ENCODE measurements at regions of chr9 and their contacts with region 1.

Region 1: DNA sequence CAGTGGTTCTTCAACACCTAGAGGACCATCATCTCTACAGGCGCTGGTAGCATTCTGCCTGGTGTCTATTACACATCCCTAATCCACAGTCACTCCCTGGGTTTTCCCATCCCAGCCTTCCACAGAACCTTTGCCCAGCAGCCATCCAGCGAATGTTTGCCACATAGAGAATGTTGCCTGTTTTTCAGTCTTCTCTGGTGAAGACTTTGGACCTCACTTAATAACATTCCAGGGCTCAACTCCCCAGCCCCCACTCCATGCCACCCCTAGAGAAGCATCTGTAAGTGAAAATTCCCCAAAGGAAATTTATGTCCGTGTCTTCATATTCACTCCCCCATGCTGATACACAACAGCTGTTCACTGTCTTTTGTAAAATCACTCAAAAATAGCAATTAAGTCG is 249.6 kb downstream of the AOPEP start:
- DNase-seq: no peak
- H3K4me3 ChIP-seq: no peak overlapping the region
- H3K4me3 Mint-ChIP-seq: no peak overlapping the region
- H3K27ac Mint-ChIP-seq: peak overlapping the region; percentile 2
- H3K4me1 ChIP-seq: peaks cover 10% of the 10 kb centered on the region
- H3K4me1 Mint-ChIP-seq: peaks cover 14% of the 10 kb centered on the region
- H3K27me3 ChIP-seq: no peaks in the 10 kb centered on the region
- H3K27me3 Mint-ChIP-seq: no peaks in the 10 kb centered on the region
- CTCF ChIP-seq: no peak

Region 2: GRCh38 chr9:94882966-94883641 is 93.0 kb before region 1 on chr9:
- CTCF ChIA-PET with region 1: no interaction called
- POLR2A ChIA-PET with region 1: no interaction called
- intact Hi-C with region 1: no loop called
- DNase-seq: no peak
- H3K4me3 ChIP-seq: no peak overlapping the region
- H3K4me3 Mint-ChIP-seq: no peak overlapping the region
- H3K27ac Mint-ChIP-seq: no peak overlapping the region
- H3K4me1 ChIP-seq: peaks cover 14% of the 10 kb centered on the region
- H3K4me1 Mint-ChIP-seq: peaks cover 8% of the 10 kb centered on the region
- H3K27me3 ChIP-seq: no peaks in the 10 kb centered on the region
- H3K27me3 Mint-ChIP-seq: no peaks in the 10 kb centered on the region
- CTCF ChIP-seq: no peak

Region 3: GRCh38 chr9:94952565-94953373 is 23.3 kb before region 1 on chr9:
- CTCF ChIA-PET with region 1: no interaction called
- POLR2A ChIA-PET with region 1: no interaction called
- intact Hi-C with region 1: no loop called
- DNase-seq: no peak
- H3K4me3 ChIP-seq: no peak overlapping the region
- H3K4me3 Mint-ChIP-seq: no peak overlapping the region
- H3K27ac Mint-ChIP-seq: peak overlapping the region; percentile 77
- H3K4me1 ChIP-seq: peaks cover 17% of the 10 kb centered on the region
- H3K4me1 Mint-ChIP-seq: peaks cover 23% of the 10 kb centered on the region
- H3K27me3 ChIP-seq: no peaks in the 10 kb centered on the region
- H3K27me3 Mint-ChIP-seq: no peaks in the 10 kb centered on the region
- CTCF ChIP-seq: no peak

Region 4: DNA sequence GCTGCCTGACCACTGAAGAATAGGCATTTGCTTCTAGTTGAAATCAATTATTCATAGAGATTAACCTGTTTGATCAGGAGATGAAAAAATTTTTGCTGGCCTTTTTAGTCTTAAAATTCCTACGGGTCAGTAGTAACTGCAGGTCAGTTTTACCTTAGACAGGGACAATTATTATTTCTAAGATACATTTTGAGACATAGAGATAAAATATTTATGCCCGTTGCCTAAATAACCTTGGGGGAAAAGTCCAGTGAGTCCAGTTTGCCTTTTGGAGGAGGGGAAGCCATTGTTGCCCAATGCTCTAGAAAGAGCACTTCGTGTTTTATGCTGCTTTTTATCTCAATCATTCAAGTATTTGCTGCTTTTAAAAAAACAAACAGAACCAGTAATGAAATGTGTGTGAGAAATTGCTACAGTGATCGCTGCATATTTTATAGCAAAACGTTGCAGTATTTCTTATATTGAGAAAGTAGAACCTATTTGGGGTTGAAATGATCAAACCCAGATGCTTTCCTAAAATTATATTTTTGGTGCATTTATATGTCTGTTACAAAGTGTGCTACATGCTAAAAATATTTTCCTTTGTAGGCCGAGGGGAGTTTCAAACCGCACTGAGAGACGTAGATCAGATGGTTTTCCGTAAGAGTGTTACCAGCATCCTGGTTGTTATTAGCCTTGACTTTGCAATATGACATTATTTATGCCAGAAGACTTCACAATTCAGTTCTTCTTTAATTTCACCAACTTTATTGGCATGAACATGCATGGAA is 17.2 kb after region 1 on chr9:
- CTCF ChIA-PET with region 1: no interaction called
- POLR2A ChIA-PET with region 1: no interaction called
- intact Hi-C with region 1: loop called (anchors 1 kb)
- DNase-seq: no peak
- H3K4me3 ChIP-seq: no peak overlapping the region
- H3K4me3 Mint-ChIP-seq: peak overlapping the region; percentile 8
- H3K27ac Mint-ChIP-seq: peak overlapping the region; percentile 17
- H3K4me1 ChIP-seq: peaks cover 45% of the 10 kb centered on the region
- H3K4me1 Mint-ChIP-seq: peaks cover 25% of the 10 kb centered on the region
- H3K27me3 ChIP-seq: no peaks in the 10 kb centered on the region
- H3K27me3 Mint-ChIP-seq: no peaks in the 10 kb centered on the region
- CTCF ChIP-seq: no peak

Region 5: GRCh38 chr9:95043826-95044225 is 67.7 kb after region 1 on chr9:
- CTCF ChIA-PET with region 1: no interaction called
- POLR2A ChIA-PET with region 1: no interaction called
- intact Hi-C with region 1: no loop called
- DNase-seq: no peak
- H3K4me3 ChIP-seq: no peak overlapping the region
- H3K4me3 Mint-ChIP-seq: no peak overlapping the region
- H3K27ac Mint-ChIP-seq: no peak overlapping the region
- H3K4me1 ChIP-seq: peaks cover 4% of the 10 kb centered on the region; the same call in 1 of the 2 replicates
- H3K4me1 Mint-ChIP-seq: peaks cover 15% of the 10 kb centered on the region
- H3K27me3 ChIP-seq: no peaks in the 10 kb centered on the region
- H3K27me3 Mint-ChIP-seq: no peaks in the 10 kb centered on the region
- CTCF ChIP-seq: no peak

Region 6: DNA sequence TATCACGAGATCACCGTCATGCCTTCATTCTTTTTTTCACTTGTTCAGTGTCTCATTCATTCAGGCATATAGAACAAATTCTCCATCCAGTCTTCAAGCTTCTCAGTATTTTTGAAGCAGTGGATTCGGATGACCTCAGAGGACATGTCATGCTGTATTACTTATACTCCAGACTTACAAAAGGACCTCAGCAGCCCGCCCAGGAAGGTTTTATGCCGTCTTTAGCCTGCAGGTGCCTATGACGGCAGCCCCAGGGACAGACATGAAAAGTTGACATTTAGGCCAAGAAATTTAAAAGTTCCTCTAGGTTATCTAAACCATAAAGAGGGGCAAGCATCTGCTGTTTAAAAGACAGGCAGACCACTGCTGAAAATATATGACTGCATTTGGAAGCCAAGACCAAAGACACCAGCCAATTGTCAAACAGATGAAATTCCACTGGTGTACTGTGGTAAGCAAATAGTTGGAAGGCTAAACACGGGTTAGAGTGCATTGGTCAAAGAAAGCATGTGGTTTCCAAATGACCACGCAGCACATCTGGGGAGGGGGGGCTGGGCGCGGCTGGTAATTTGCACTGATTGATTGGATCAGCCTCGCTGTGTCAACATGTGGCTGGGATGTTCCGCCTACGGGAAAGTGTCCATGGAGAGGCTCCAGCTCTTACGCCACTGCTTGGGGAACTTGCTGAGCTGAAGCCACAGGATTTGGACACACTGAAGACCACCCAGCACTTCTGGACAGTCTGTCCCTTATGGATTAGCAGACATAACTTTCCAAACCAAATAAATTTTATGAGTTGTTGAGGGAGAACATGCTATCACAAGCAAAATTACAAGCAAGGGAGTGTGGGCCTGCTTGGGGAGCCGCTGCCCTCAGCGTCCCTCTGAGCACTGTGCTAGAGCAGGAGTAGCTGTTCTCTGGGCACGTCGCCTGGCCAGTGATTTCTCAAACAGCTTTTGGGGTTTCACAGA is 167.8 kb after region 1 on chr9:
- CTCF ChIA-PET with region 1: no interaction called
- POLR2A ChIA-PET with region 1: no interaction called
- intact Hi-C with region 1: no loop called
- DNase-seq: no peak
- H3K4me3 ChIP-seq: no peak overlapping the region
- H3K4me3 Mint-ChIP-seq: no peak overlapping the region
- H3K27ac Mint-ChIP-seq: no peak overlapping the region
- H3K4me1 ChIP-seq: no peaks in the 10 kb centered on the region
- H3K4me1 Mint-ChIP-seq: no peaks in the 10 kb centered on the region
- H3K27me3 ChIP-seq: no peaks in the 10 kb centered on the region
- H3K27me3 Mint-ChIP-seq: no peaks in the 10 kb centered on the region
- CTCF ChIP-seq: no peak